Gastrocnemius medialis (tissue), 4 donors: ENCODE measurements at regions of chr5 and their contacts with region 1.

Region 1: GRCh38 chr5:164504141-164504772 is 998.8 kb downstream of the MAT2B start:
- DNase-seq: no peak
- ATAC-seq: no peak
- H3K4me3 ChIP-seq: no peak overlapping the region
- H3K27ac ChIP-seq: no peak overlapping the region
- H3K4me1 ChIP-seq: peaks cover 0 to 5% of the 10 kb centered on the region in 2 donors
- H3K27me3 ChIP-seq: no peaks in the 10 kb centered on the region
- CTCF ChIP-seq: peak; percentile 25 to 51 (median 46)
- POLR2A ChIP-seq: no peak

Region 2: DNA sequence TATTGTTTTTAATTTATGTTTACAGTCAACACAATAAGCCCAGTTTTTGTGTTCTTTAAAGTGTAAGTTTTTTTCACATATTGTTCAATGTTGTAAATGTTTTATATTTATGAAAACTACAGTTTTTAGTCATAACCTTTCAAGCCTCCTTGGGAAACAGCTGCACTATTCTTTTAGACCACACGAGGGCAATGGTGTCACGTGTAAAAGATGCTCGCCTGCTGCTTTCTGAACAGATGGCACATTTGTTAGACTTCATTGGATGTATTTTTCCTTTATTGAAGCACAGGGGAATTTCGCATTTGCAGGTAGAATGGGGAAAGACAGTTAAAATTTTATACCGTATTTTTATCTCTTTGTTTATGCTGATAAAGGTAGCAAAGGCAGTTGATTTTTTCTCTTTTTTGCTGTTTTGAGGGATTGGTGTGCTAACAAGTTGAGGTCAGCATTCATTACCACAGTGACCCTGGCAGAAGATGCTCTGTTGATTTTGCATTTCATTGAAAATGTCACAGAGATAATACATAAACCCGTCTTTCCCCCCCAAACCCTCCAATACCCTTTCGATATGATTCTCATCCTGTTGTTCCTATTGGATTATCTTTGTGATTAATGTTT is 939.8 kb before region 1 on chr5:
- in situ Hi-C with region 1: loop called in 3 of 4 experiments (anchors 10 to 25 kb)
- intact Hi-C with region 1: no loop called
- DNase-seq: peak in 1 of 2 donors; percentile 21
- ATAC-seq: no peak
- H3K4me3 ChIP-seq: no peak overlapping the region
- H3K27ac ChIP-seq: no peak overlapping the region
- H3K4me1 ChIP-seq: peaks cover 9 to 12% of the 10 kb centered on the region in 2 donors
- H3K27me3 ChIP-seq: peaks cover 24 to 30% (median 26%) of the 10 kb centered on the region in 3 donors
- CTCF ChIP-seq: peak; percentile 70 to 87 (median 79)
- POLR2A ChIP-seq: no peak

Region 3: GRCh38 chr5:164013077-164013670 is 491.1 kb before region 1 on chr5:
- in situ Hi-C with region 1: loop called in 1 of 4 experiments (anchors 25 kb)
- intact Hi-C with region 1: loop called (anchors 2 kb)
- DNase-seq: no peak
- ATAC-seq: no peak
- H3K4me3 ChIP-seq: no peak overlapping the region
- H3K27ac ChIP-seq: no peak overlapping the region
- H3K4me1 ChIP-seq: no peaks in the 10 kb centered on the region
- H3K27me3 ChIP-seq: no peaks in the 10 kb centered on the region
- CTCF ChIP-seq: peak in 4 of 5 experiments; percentile 32 to 52 (median 44)
- POLR2A ChIP-seq: no peak

Region 4: GRCh38 chr5:164027738-164028137 is 476.5 kb before region 1 on chr5:
- in situ Hi-C with region 1: loop called in 2 of 4 experiments (anchors 10 to 25 kb)
- intact Hi-C with region 1: no loop called
- DNase-seq: no peak
- ATAC-seq: no peak
- H3K4me3 ChIP-seq: no peak overlapping the region
- H3K27ac ChIP-seq: no peak overlapping the region
- H3K4me1 ChIP-seq: no peaks in the 10 kb centered on the region
- H3K27me3 ChIP-seq: no peaks in the 10 kb centered on the region
- CTCF ChIP-seq: no peak
- POLR2A ChIP-seq: no peak

Region 5: GRCh38 chr5:164256351-164256750 is 247.9 kb before region 1 on chr5:
- in situ Hi-C with region 1: no loop called
- intact Hi-C with region 1: no loop called
- DNase-seq: no peak
- ATAC-seq: no peak
- H3K4me3 ChIP-seq: no peak overlapping the region
- H3K27ac ChIP-seq: no peak overlapping the region
- H3K4me1 ChIP-seq: no peaks in the 10 kb centered on the region
- H3K27me3 ChIP-seq: no peaks in the 10 kb centered on the region
- CTCF ChIP-seq: no peak
- POLR2A ChIP-seq: no peak